Naive thymus-derived CD4-positive, alpha-beta T cell (primary cell): ENCODE measurements at regions of chr16 and their contacts with region 1.

Region 1: GRCh38 chr16:46673320-46674013 is 15.5 kb downstream of the VPS35 start:
- DNase-seq: peak in 8 of 9 donors; percentile 10 to 59 (median 44)
- ATAC-seq: peak; percentile 97
- H3K4me3 ChIP-seq: no peak overlapping the region
- H3K4me3 Mint-ChIP-seq: no peak overlapping the region
- H3K27ac ChIP-seq: no peak overlapping the region
- H3K27ac Mint-ChIP-seq: peak overlapping the region in 1 of 9 donors; percentile 21
- H3K4me1 ChIP-seq: no peaks in the 10 kb centered on the region
- H3K4me1 Mint-ChIP-seq: peaks cover 0 to 3% (median 0%) of the 10 kb centered on the region in 7 donors
- H3K27me3 ChIP-seq: no peaks in the 10 kb centered on the region
- H3K27me3 Mint-ChIP-seq: no peaks in the 10 kb centered on the region

Region 2: DNA sequence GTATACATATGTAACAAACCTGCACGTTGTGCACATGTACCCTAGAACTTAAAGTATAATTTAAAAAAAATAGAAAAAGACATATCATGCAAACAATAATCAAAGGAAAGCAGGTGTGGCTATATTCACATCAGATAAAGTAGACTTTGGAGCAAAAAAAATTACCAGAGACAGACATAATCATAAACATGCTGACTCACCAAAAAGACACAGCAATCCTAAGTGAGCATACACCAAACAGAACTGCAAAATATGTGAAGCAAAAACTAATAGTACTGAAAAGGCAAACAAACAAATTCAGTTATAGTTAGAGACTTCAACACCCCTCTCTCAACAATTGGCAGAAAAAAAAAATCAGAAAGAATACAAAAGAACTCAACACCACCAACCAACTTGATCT is 82.2 kb before region 1 on chr16:
- CTCF ChIA-PET with region 1: no interaction called
- POLR2A ChIA-PET with region 1: no interaction called
- intact Hi-C with region 1: no loop called
- DNase-seq: no peak
- ATAC-seq: no peak
- H3K4me3 ChIP-seq: no peak overlapping the region
- H3K4me3 Mint-ChIP-seq: no peak overlapping the region
- H3K27ac ChIP-seq: no peak overlapping the region
- H3K27ac Mint-ChIP-seq: no peak overlapping the region
- H3K4me1 ChIP-seq: no peaks in the 10 kb centered on the region
- H3K4me1 Mint-ChIP-seq: peaks cover 0 to 4% (median 0%) of the 10 kb centered on the region in 7 donors
- H3K27me3 ChIP-seq: no peaks in the 10 kb centered on the region
- H3K27me3 Mint-ChIP-seq: peaks cover 0 to 1% (median 0%) of the 10 kb centered on the region in 5 donors

Region 3: GRCh38 chr16:46908540-46909372 is 235.3 kb after region 1 on chr16:
- CTCF ChIA-PET with region 1: interaction called, 12 read pairs
- POLR2A ChIA-PET with region 1: no interaction called
- intact Hi-C with region 1: loop called in 1 of 2 experiments (anchors 1 kb)
- DNase-seq: peak; percentile 23 to 57 (median 47)
- ATAC-seq: peak; percentile 60
- H3K4me3 ChIP-seq: no peak overlapping the region
- H3K4me3 Mint-ChIP-seq: no peak overlapping the region
- H3K27ac ChIP-seq: no peak overlapping the region
- H3K27ac Mint-ChIP-seq: peak overlapping the region in 1 of 9 donors; percentile 35
- H3K4me1 ChIP-seq: no peaks in the 10 kb centered on the region
- H3K4me1 Mint-ChIP-seq: peaks cover 0 to 17% (median 0%) of the 10 kb centered on the region in 7 donors
- H3K27me3 ChIP-seq: no peaks in the 10 kb centered on the region
- H3K27me3 Mint-ChIP-seq: no peaks in the 10 kb centered on the region

Region 4: DNA sequence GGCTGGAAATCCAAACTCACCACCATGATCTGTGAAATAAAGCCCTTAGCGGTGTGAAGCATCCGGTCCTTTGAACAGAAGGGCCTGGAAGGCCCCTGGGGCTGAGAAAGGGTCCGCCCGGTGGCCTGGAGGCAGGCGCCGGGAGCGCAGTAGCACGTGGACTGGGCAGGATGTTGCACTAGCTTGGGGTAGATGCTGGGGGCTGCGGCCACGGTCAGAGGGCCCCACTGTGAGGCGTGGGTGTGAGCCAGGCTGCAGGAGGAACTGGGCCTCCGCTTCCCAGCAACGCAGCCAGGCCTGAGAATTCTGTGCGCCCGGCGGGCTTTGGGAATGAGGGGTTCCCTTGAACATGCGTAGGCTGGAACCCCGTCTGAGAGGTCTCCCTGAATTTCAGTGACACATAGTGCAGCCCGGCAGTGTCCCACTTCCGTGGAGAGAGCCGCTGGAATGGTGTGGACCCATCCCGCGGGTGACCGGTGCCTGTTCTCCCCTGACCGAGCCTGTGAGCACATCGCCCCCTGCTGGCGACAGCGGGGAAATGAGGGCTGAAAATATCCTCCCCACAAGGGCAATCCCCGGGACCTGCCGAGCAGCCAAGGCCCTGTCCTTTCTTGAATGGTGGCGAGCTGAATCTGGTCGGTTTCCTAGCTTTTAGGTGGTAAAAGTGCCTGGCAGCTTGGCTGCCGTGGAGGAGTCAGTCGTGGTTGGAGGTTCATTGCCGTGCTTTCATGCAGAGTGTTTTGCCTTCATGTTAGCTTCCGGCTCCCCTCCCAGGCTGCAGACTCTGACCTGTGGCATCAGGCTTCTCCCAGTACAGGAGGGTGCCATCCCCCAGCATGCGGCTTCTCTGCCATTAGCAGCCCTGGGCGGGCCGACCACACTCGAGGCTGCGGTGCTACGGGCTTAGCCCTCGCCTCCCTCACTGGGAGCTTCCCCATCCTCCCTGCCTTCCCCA is 256.2 kb after region 1 on chr16:
- CTCF ChIA-PET with region 1: interaction called, 3 read pairs
- POLR2A ChIA-PET with region 1: no interaction called
- intact Hi-C with region 1: loop called in 1 of 2 experiments (anchors 5 kb)
- DNase-seq: peak; percentile 15 to 73 (median 38)
- ATAC-seq: peak; percentile 83
- H3K4me3 ChIP-seq: no peak overlapping the region
- H3K4me3 Mint-ChIP-seq: no peak overlapping the region
- H3K27ac ChIP-seq: no peak overlapping the region
- H3K27ac Mint-ChIP-seq: no peak overlapping the region
- H3K4me1 ChIP-seq: no peaks in the 10 kb centered on the region
- H3K4me1 Mint-ChIP-seq: peaks cover 0 to 5% (median 0%) of the 10 kb centered on the region in 7 donors
- H3K27me3 ChIP-seq: no peaks in the 10 kb centered on the region
- H3K27me3 Mint-ChIP-seq: no peaks in the 10 kb centered on the region